ENCODE measurements at regions of chr11 and their contacts with region 1.

Region 1: GRCh38 chr11:18012863-18013781 is at the start of gene SERGEF:
- DNase-seq: peak; percentile 72 to 94
- H3K4me3 ChIP-seq: peak within 1 kb of the TSS; percentile 85 to 97 (median 92)
- H3K27ac ChIP-seq: no peak within 1 kb of the TSS; the same call in 1 of the 2 replicates
- H3K4me1 ChIP-seq: peaks cover 0 to 8% (median 2%) of the 10 kb centered on the region in 4 experiments; a peak in 3 of 7 replicates
- H3K27me3 ChIP-seq: peaks cover 0 to 12% (median 7%) of the 10 kb centered on the region in 4 experiments; a peak in 5 of 7 replicates
- CTCF ChIP-seq: peak in 2 of 3 experiments; percentile 12 to 24; a peak in 2 of 4 replicates
- EP300 ChIP-seq: no peak
- POLR2A ChIP-seq: peak in 1 of 2 experiments; percentile 38; a peak in 1 of 3 replicates
- RAD21 ChIP-seq: peak in 1 of 2 experiments; percentile 22; a peak in 1 of 4 replicates
- total RNA-seq, gene SERGEF: 28.8 and 35.8 TPM in 2 replicates

Region 2: GRCh38 chr11:17991783-17992433 is 21.2 kb before region 1 on chr11:
- CTCF ChIA-PET with region 1: interaction called, 11 read pairs
- POLR2A ChIA-PET with region 1: interaction called, 3 read pairs
- DNase-seq: no peak
- H3K4me3 ChIP-seq: no peak overlapping the region
- H3K27ac ChIP-seq: no peak overlapping the region
- H3K4me1 ChIP-seq: no peaks in the 10 kb centered on the region
- H3K27me3 ChIP-seq: no peaks in the 10 kb centered on the region
- CTCF ChIP-seq: peak in 2 of 3 experiments; percentile 55 to 71; a peak in 3 of 4 replicates
- EP300 ChIP-seq: no peak
- POLR2A ChIP-seq: no peak
- RAD21 ChIP-seq: peak; percentile 57 to 67

Region 3: DNA sequence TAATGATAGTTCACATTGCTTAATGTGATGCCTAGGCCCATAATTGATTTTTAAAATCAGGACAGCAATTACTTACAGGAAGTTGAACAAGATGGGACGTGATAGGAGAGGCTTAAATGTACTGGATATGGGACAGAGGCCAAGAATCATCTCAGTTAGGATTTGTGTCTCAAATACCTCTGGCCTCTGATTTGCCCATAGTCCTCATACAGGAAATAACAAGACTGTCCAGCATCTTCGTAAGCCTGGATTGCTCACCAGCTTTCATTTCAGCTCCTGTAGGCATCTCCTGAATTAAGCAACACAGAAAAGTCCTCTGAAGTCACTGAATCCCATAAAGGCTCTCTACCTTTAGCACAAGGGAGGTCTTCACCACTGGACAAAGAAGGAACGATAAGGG is 119.2 kb after region 1 on chr11 and contains the start of gene MRGPRX3:
- CTCF ChIA-PET with region 1: no interaction called
- POLR2A ChIA-PET with region 1: no interaction called
- DNase-seq: no peak
- H3K4me3 ChIP-seq: no peak within 1 kb of the TSS
- H3K27ac ChIP-seq: no peak within 1 kb of the TSS
- H3K4me1 ChIP-seq: peaks cover 0 to 9% (median 0%) of the 10 kb centered on the region in 4 experiments; a peak in 1 of 7 replicates
- H3K27me3 ChIP-seq: no peaks in the 10 kb centered on the region
- CTCF ChIP-seq: no peak
- EP300 ChIP-seq: no peak
- POLR2A ChIP-seq: no peak
- RAD21 ChIP-seq: no peak
- total RNA-seq, gene MRGPRX3: not detected in 2 replicates

Region 4: DNA sequence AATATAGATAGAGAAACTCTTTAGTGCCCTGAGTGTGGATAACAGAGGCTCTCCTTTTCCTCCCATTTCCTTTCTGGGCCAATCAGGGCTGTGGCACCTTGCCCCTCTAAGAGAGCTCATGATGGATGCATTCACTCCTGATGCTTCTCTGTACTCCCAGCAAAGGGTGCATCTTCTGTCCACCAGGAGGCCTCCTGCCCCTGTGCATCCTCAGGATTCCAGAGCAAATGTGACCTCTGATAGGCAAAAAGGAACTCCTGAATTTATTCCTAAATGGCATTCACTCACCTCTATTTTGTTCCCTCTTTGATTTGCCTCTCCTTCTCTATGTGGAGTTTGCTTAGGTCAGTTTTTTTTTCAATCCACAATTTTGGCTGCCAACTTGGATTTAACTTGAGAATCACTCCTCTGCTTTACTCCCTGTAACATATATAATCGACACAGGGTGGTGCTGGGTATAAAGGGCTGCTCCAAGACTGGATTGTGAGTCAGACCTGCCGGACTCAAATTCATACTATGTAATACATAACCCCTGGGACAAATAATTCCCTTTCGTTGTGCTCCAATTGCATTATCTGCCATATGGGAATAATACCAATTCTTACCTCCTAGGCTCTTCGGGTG is 158.4 kb after region 1 on chr11:
- CTCF ChIA-PET with region 1: no interaction called
- POLR2A ChIA-PET with region 1: no interaction called
- DNase-seq: no peak
- H3K4me3 ChIP-seq: no peak overlapping the region
- H3K27ac ChIP-seq: no peak overlapping the region
- H3K4me1 ChIP-seq: no peaks in the 10 kb centered on the region
- H3K27me3 ChIP-seq: no peaks in the 10 kb centered on the region
- CTCF ChIP-seq: peak; percentile 72 to 80 (median 74)
- EP300 ChIP-seq: no peak
- POLR2A ChIP-seq: no peak
- RAD21 ChIP-seq: peak; percentile 78

Measured in H1 (cell line).